CD8-positive, alpha-beta T cell (primary cell): ENCODE measurements at regions of chr19 and their contacts with region 1.

Region 1: DNA sequence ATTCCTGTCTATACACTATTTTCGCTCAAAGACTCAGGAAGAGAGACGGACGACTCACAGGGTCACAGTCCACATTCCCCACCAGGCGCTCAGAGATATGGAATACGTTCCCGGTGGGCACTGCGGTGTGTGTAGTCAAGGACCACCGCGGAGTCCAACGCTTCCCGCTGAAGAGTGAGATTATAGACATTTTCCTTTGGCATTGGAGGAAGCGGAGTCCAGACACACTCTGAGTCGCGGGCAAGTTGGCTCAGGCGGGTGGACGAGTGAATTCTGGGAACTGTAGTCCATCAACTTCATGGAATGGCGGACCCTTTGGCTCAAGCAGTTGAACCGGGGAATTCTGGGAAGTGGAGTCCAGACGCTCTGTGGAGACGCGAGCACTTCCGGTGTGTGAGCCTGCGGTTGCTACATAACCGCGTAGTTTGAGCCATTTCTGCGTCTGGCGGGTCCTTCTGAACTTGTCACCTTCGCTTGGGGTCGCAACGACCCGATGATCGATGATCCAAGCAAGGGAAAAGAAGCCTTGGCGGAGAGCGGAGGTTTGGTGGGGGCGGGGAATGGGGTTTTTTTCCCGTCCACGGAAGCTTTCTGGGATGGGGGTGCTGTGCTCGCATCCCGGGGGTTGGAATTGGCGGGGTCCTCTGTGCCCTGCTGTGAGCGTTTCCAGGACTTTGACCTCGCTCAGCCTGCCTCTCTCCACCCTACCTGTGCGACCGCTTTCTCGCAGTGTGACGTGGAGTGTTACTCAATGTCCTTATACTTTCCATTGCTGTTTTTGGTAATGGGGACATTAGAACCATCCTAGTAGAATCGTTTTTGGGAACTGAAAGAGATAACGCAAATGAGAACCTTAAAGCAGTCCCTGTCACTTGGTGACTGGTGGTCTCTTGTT is at the start of gene ZNF230:
- DNase-seq: peak; percentile 64 to 96 (median 82)
- ATAC-seq: peak; percentile 96
- H3K4me3 ChIP-seq: peak within 1 kb of the TSS; percentile 91 to 92
- H3K4me3 Mint-ChIP-seq: peak within 1 kb of the TSS; percentile 99
- H3K27ac ChIP-seq: peak within 1 kb of the TSS; percentile 59 to 81
- H3K27ac Mint-ChIP-seq: peak within 1 kb of the TSS; percentile 98
- H3K4me1 ChIP-seq: peaks cover 12% of the 10 kb centered on the region
- H3K4me1 Mint-ChIP-seq: peaks cover 23% of the 10 kb centered on the region
- H3K27me3 ChIP-seq: no peaks in the 10 kb centered on the region
- H3K27me3 Mint-ChIP-seq: no peaks in the 10 kb centered on the region
- CTCF ChIP-seq: no peak
- total RNA-seq, gene ZNF230: 2.4 to 3.8 TPM

Region 2: DNA sequence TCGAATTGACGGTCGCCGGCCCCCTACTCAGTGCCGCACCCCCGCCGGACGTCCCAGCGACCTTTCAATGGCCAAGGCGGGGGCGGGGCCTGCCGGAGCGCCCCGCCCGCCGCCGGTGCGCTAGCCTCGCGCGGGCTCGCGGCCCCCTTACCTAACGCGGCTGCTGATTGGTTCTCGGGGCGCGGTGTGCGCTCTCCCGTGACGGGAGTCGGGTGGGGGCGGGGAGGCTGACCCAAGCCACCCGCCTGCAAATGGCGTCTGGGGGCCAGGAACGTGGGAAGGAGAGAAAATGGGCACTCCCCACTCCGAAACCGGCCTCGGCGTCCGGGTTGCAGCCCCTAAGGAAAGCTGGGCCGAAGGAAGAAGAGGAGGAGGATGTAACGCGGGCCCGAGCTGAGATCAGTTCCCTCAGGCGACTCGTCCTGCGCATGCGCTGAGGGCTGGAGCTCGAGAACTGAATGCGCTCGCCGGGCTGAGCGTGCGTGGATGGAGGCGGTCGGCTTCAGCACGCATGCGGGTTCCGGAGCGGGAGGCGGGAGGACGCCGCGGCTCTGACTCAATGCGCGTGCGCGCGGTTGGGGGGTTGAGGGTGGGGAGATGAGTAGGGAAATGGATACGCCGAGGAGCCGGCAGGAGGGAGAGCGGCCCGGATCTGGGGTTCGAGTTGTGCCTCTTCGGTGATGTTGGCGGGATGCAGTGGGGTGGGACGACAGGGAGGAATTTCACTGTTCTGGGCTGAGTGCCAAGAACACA is 248.1 kb before region 1 on chr19 and contains the start of gene SMG9:
- CTCF ChIA-PET with region 1: no interaction called
- POLR2A ChIA-PET with region 1: no interaction called
- intact Hi-C with region 1: no loop called
- DNase-seq: peak; percentile 95 to 99 (median 99)
- ATAC-seq: peak; percentile 80
- H3K4me3 ChIP-seq: peak within 1 kb of the TSS; percentile 71 to 72
- H3K4me3 Mint-ChIP-seq: peak within 1 kb of the TSS; percentile 92
- H3K27ac ChIP-seq: peak within 1 kb of the TSS; percentile 85 to 97
- H3K27ac Mint-ChIP-seq: peak within 1 kb of the TSS; percentile 98
- H3K4me1 ChIP-seq: peaks cover 21% of the 10 kb centered on the region
- H3K4me1 Mint-ChIP-seq: peaks cover 46% of the 10 kb centered on the region
- H3K27me3 ChIP-seq: no peaks in the 10 kb centered on the region
- H3K27me3 Mint-ChIP-seq: no peaks in the 10 kb centered on the region
- CTCF ChIP-seq: no peak
- total RNA-seq, gene SMG9: 32.2 to 34.3 TPM

Region 3: GRCh38 chr19:43855616-43856015 is 147.2 kb before region 1 on chr19:
- CTCF ChIA-PET with region 1: no interaction called
- POLR2A ChIA-PET with region 1: no interaction called
- intact Hi-C with region 1: no loop called
- DNase-seq: no peak
- ATAC-seq: no peak
- H3K4me3 ChIP-seq: no peak overlapping the region
- H3K4me3 Mint-ChIP-seq: no peak overlapping the region
- H3K27ac ChIP-seq: no peak overlapping the region
- H3K27ac Mint-ChIP-seq: no peak overlapping the region
- H3K4me1 ChIP-seq: no peaks in the 10 kb centered on the region
- H3K4me1 Mint-ChIP-seq: no peaks in the 10 kb centered on the region
- H3K27me3 ChIP-seq: no peaks in the 10 kb centered on the region
- H3K27me3 Mint-ChIP-seq: no peaks in the 10 kb centered on the region
- CTCF ChIP-seq: no peak

Region 4: GRCh38 chr19:43950834-43951645 is 51.8 kb before region 1 on chr19 and contains the start of gene ZNF221:
- CTCF ChIA-PET with region 1: no interaction called
- POLR2A ChIA-PET with region 1: no interaction called
- intact Hi-C with region 1: loop called (anchors 2 to 5 kb)
- DNase-seq: peak; percentile 4 to 83 (median 52)
- ATAC-seq: peak; percentile 62
- H3K4me3 ChIP-seq: peak within 1 kb of the TSS; percentile 61 to 65
- H3K4me3 Mint-ChIP-seq: peak within 1 kb of the TSS; percentile 95
- H3K27ac ChIP-seq: peak within 1 kb of the TSS; percentile 13 to 34
- H3K27ac Mint-ChIP-seq: peak within 1 kb of the TSS; percentile 74
- H3K4me1 ChIP-seq: peaks cover 7% of the 10 kb centered on the region
- H3K4me1 Mint-ChIP-seq: peaks cover 14% of the 10 kb centered on the region
- H3K27me3 ChIP-seq: no peaks in the 10 kb centered on the region
- H3K27me3 Mint-ChIP-seq: peaks cover 12% of the 10 kb centered on the region
- CTCF ChIP-seq: no peak
- total RNA-seq, gene ZNF221: 0.24 to 0.25 TPM

Region 5: DNA sequence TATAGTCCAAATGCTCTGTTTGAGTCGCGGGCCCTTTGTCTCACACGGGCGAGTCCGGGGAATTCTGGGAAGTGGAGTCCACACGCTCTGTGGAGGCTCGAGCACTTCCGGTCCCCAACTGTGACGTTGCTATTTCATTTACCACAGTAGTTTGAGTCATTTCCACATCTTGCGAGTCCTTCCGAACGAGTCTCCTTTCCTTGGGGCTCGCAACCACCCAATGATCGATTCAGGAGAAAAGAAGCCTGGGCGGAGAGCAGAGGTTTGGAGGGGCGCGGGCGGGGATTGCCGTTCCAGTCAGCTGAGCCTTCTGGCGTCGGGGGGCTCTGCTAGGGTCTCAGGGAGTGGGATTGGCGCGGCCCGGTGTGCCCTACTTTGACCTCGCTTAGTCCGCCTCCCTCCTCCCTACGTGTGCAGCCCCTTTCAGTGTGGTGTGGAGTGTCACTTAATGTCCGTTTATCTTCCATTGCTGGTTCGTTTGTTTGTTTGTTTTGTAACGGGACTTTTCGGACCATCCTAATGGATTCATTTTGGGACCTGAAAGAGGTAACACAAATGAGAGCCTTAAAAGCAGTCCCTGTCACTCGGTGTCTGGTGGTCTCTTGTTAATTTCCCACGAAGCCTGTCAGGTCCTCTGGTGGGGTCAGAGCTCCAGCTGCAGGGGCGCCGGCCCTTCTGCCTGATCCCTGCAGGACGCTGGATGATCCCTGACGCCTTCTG is 22.6 kb after region 1 on chr19 and contains the start of gene ZNF222:
- CTCF ChIA-PET with region 1: no interaction called
- POLR2A ChIA-PET with region 1: no interaction called
- intact Hi-C with region 1: loop called (anchors 1 kb)
- DNase-seq: peak; percentile 34 to 89 (median 75)
- ATAC-seq: peak; percentile 97
- H3K4me3 ChIP-seq: peak within 1 kb of the TSS; percentile 84 to 92
- H3K4me3 Mint-ChIP-seq: peak within 1 kb of the TSS; percentile 95
- H3K27ac ChIP-seq: peak within 1 kb of the TSS; percentile 47 to 61
- H3K27ac Mint-ChIP-seq: peak within 1 kb of the TSS; percentile 91
- H3K4me1 ChIP-seq: peaks cover 12% of the 10 kb centered on the region
- H3K4me1 Mint-ChIP-seq: peaks cover 30% of the 10 kb centered on the region
- H3K27me3 ChIP-seq: no peaks in the 10 kb centered on the region
- H3K27me3 Mint-ChIP-seq: peaks cover 1% of the 10 kb centered on the region
- CTCF ChIP-seq: no peak
- total RNA-seq, gene ZNF222: 7.7 TPM

Region 6: DNA sequence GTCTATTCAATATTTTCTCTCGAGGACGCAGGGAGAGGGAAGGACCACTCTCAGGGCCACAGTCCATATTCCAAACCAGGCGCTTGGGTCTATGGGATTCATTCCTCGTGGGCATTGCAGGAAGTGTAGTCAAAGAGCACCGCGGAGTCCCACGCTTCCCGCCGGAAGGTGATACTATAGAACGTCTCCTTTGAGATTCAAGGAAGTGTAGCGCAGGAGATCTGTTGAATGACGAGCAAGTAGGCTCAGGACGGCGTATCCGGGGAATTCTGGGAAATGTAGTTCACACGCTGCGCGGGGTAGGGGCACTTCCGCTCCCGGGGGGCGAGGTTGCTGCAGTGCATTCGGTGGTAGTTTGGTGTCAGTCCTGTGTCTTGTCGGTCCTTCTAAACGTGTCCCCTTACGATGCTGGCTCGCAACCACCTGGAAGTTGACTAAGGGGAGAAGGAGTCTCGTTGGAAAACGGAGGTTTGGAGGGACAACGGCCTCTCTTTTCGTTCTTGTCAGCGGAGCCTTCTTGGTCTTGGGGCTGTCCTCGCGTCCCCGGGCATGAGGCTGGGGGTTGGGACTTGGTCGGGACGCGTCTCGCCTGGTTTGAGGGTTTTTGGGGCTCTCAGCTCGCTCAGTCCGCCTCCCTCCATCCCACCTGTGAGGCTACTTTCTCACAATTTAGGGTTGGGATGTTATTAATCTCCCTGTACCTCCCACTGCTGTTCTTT is 69.2 kb after region 1 on chr19 and contains the start of gene ZNF284:
- CTCF ChIA-PET with region 1: no interaction called
- POLR2A ChIA-PET with region 1: no interaction called
- intact Hi-C with region 1: loop called (anchors 1 kb)
- DNase-seq: peak; percentile 60 to 93 (median 83)
- ATAC-seq: peak; percentile 99
- H3K4me3 ChIP-seq: peak within 1 kb of the TSS; percentile 65 to 73
- H3K4me3 Mint-ChIP-seq: peak within 1 kb of the TSS; percentile 91
- H3K27ac ChIP-seq: peak within 1 kb of the TSS; percentile 2 to 59
- H3K27ac Mint-ChIP-seq: peak within 1 kb of the TSS; percentile 79
- H3K4me1 ChIP-seq: peaks cover 16% of the 10 kb centered on the region
- H3K4me1 Mint-ChIP-seq: peaks cover 36% of the 10 kb centered on the region
- H3K27me3 ChIP-seq: no peaks in the 10 kb centered on the region
- H3K27me3 Mint-ChIP-seq: no peaks in the 10 kb centered on the region
- CTCF ChIP-seq: no peak
- total RNA-seq, gene ZNF284: 0.64 to 1.2 TPM

Region 7: GRCh38 chr19:44164673-44165512 is 162.1 kb after region 1 on chr19 and contains the start of gene ZNF226:
- CTCF ChIA-PET with region 1: no interaction called
- POLR2A ChIA-PET with region 1: no interaction called
- intact Hi-C with region 1: loop called (anchors 1 to 2 kb)
- DNase-seq: peak; percentile 61 to 95 (median 82)
- ATAC-seq: peak; percentile 92
- H3K4me3 ChIP-seq: peak within 1 kb of the TSS; percentile 72 to 79
- H3K4me3 Mint-ChIP-seq: peak within 1 kb of the TSS; percentile 98
- H3K27ac ChIP-seq: peak within 1 kb of the TSS; percentile 69 to 90
- H3K27ac Mint-ChIP-seq: peak within 1 kb of the TSS; percentile 99
- H3K4me1 ChIP-seq: peaks cover 10% of the 10 kb centered on the region
- H3K4me1 Mint-ChIP-seq: peaks cover 31% of the 10 kb centered on the region
- H3K27me3 ChIP-seq: no peaks in the 10 kb centered on the region
- H3K27me3 Mint-ChIP-seq: no peaks in the 10 kb centered on the region
- CTCF ChIP-seq: no peak
- total RNA-seq, gene ZNF226: 9.1 to 10.8 TPM

Region 8: DNA sequence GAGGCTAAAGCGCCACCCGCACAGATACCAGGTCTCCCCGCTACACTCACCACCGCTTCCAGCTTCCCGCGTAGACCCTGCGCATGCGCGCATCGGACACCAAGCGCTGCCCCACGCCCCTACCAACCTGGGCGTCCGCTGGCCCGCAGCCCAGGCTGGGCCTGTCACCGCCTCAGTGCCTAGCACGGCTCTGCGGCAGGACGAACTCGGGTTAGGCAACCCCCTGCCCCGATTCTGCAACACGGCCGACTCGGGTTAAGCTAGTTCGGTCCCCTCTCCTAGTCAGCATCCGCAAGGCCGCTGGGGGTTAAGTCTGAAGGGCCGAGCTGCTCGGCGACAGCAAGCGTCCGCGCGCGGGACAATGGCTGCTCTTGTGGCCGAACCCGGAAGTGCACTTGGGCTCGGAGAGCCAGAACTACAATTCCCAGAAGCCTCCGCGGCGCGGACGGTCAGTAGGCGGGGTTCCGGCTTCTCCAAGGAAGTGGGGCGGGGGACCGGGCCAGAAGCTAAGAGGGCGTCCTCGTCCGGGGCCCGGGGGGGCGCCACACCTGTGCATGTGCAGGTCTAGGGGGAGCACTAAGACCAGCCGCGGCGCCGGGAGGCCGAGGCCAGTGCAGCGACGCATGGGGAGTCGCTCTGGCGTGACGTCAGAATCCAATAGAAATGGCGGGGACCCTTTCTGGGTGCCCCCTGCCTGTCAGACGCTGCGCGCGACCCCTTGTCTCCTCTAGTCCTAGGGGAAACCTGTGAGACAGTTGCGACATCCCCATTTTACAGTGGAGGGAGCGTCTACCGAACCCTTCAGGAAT is 497.5 kb after region 1 on chr19 and contains the start of gene ZNF180:
- CTCF ChIA-PET with region 1: no interaction called
- POLR2A ChIA-PET with region 1: no interaction called
- intact Hi-C with region 1: loop called (anchors 1 to 2 kb)
- DNase-seq: peak; percentile 89 to 98 (median 96)
- ATAC-seq: peak; percentile 96
- H3K4me3 ChIP-seq: peak within 1 kb of the TSS; percentile 86 to 90
- H3K4me3 Mint-ChIP-seq: peak within 1 kb of the TSS; percentile 92
- H3K27ac ChIP-seq: peak within 1 kb of the TSS; percentile 60 to 77
- H3K27ac Mint-ChIP-seq: peak within 1 kb of the TSS; percentile 92
- H3K4me1 ChIP-seq: peaks cover 21% of the 10 kb centered on the region
- H3K4me1 Mint-ChIP-seq: peaks cover 34% of the 10 kb centered on the region
- H3K27me3 ChIP-seq: no peaks in the 10 kb centered on the region
- H3K27me3 Mint-ChIP-seq: peaks cover 10% of the 10 kb centered on the region
- CTCF ChIP-seq: peak; percentile 35
- total RNA-seq, gene ZNF180: 8.5 to 8.8 TPM

Region 9: DNA sequence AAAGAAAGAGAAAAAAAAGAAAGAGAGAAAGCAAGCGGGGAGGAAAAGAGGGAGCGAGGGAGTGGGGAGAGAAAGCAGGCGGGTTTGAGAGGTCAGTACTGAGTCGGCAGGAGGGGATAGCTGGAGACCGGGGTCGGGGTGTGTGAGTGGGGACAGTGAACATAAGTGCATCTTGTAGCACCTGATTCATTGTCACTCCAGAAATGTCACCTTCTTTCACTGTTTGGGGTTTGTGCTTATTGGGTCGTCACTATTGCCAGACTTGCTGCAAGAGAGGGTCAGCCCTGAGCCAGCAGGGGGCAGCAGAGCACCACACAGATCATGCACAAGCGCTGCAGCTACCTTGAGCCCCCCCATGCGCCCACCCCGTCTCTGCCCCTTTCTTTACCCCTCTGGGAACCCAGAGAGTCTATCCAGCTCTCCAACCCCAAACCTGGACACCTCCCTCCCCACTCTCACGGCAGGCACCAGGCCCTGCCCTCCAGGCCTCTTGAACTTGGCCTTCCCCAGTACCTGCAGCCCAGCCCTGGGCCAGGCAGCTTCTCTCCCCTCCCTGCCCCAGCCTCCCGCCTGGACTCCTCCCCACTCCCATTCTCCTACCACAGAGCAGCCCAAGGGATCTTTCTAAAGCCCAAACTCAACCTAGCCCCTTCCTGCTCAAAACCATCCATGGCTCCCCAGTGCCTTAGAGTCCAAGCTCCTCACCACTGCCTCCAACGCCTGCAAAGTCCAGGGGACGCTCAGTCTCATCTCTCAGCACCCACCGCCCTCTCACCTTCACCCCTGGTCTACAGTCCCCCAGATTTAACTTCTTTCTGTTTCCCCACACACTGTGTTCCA is 686.5 kb after region 1 on chr19:
- CTCF ChIA-PET with region 1: no interaction called
- POLR2A ChIA-PET with region 1: no interaction called
- intact Hi-C with region 1: no loop called
- DNase-seq: peak; percentile 64 to 87 (median 81)
- ATAC-seq: peak; percentile 59
- H3K4me3 ChIP-seq: no peak overlapping the region
- H3K4me3 Mint-ChIP-seq: no peak overlapping the region
- H3K27ac ChIP-seq: no peak overlapping the region
- H3K27ac Mint-ChIP-seq: no peak overlapping the region
- H3K4me1 ChIP-seq: peaks cover 25% of the 10 kb centered on the region
- H3K4me1 Mint-ChIP-seq: peaks cover 22% of the 10 kb centered on the region
- H3K27me3 ChIP-seq: peaks cover 0 to 4% of the 10 kb centered on the region in 2 experiments
- H3K27me3 Mint-ChIP-seq: peaks cover 16% of the 10 kb centered on the region
- CTCF ChIP-seq: peak; percentile 81

Region 10: DNA sequence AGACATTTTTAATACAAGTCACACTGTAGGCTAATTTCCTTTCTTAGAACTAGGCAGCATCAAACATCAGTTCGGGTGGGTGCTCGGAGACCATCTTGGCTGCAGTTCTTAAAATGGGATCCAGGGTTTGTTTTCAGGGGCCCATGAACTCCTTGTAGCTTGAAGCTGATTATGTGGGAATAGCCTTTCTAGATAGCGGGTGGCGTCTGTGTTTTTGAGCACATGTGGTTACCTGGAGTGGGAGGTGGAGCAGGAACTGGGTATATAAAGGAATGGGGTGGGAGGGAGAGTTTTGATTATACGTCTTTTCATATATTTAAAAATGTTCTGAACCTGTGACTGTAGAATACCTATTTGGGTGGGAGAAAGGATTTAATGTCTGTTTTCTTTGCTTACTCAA is 965.3 kb after region 1 on chr19:
- CTCF ChIA-PET with region 1: no interaction called
- POLR2A ChIA-PET with region 1: no interaction called
- intact Hi-C with region 1: no loop called
- DNase-seq: no peak
- ATAC-seq: no peak
- H3K4me3 ChIP-seq: no peak overlapping the region
- H3K4me3 Mint-ChIP-seq: no peak overlapping the region
- H3K27ac ChIP-seq: no peak overlapping the region
- H3K27ac Mint-ChIP-seq: no peak overlapping the region
- H3K4me1 ChIP-seq: no peaks in the 10 kb centered on the region
- H3K4me1 Mint-ChIP-seq: peaks cover 2% of the 10 kb centered on the region
- H3K27me3 ChIP-seq: no peaks in the 10 kb centered on the region
- H3K27me3 Mint-ChIP-seq: no peaks in the 10 kb centered on the region
- CTCF ChIP-seq: no peak